Endothelial cell of umbilical vein (primary cell): ENCODE measurements at regions of chr6 and their contacts with region 1.

Region 1: GRCh38 chr6:46848684-46849360 is 55.6 kb downstream of the MEP1A start:
- DNase-seq: peak; percentile 82
- H3K4me3 ChIP-seq: no peak overlapping the region
- H3K27ac ChIP-seq: peak overlapping the region; percentile 54
- H3K4me1 ChIP-seq: peaks cover 31% of the 10 kb centered on the region
- H3K27me3 ChIP-seq: no peaks in the 10 kb centered on the region
- CTCF ChIP-seq: peak; percentile 97
- POLR2A ChIP-seq: no peak

Region 2: GRCh38 chr6:46347669-46348068 is 501.2 kb before region 1 on chr6:
- CTCF ChIA-PET with region 1: no interaction called
- POLR2A ChIA-PET with region 1: no interaction called
- dilution Hi-C with region 1: no loop called
- intact Hi-C with region 1: no loop called
- DNase-seq: no peak
- H3K4me3 ChIP-seq: no peak overlapping the region
- H3K27ac ChIP-seq: no peak overlapping the region
- H3K4me1 ChIP-seq: no peaks in the 10 kb centered on the region
- H3K27me3 ChIP-seq: no peaks in the 10 kb centered on the region
- CTCF ChIP-seq: no peak
- POLR2A ChIP-seq: no peak

Region 3: DNA sequence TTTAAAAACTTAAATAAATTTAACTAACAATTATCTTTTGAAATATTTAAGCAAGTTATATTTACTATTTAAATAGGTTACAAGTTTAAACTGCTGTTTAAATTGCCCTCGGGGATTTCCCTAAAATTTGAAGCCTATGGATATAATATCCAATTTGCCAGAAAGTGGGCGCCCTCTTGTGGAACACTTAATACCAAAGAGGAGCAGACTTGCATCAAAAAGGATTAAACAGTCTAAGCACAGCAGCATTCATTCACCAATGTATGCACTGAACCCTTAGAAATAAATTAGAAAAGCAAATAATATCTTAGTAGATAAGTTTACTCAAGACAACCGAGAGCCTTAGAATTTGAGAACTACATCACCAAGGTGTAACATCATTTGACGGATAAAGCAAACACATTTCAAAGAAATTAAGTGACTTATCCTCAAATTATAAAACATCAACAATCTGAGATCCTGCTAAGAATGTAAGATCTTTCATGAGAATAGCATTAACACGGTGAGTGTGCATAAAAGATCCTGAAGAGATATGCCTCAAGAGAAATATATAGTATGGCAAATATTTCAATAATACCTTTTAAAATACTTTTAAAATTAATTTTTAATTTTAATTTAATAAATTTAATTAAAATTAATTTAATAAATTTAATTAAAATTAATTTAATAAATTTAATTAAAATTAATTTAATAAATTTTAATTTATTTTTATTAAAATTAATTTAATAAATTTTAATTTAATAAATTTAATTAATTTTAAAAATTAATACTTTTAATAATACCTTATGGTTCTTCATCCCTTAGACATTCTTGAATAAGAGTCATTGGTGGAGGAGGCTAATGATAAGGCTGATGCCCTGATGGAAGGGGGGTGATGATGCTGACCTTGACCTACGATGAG is 67.1 kb before region 1 on chr6:
- CTCF ChIA-PET with region 1: no interaction called
- POLR2A ChIA-PET with region 1: no interaction called
- dilution Hi-C with region 1: no loop called
- intact Hi-C with region 1: loop called (anchors 1 kb)
- DNase-seq: peak; percentile 63
- H3K4me3 ChIP-seq: no peak overlapping the region
- H3K27ac ChIP-seq: no peak overlapping the region
- H3K4me1 ChIP-seq: no peaks in the 10 kb centered on the region
- H3K27me3 ChIP-seq: peaks cover 0 to 4% of the 10 kb centered on the region in 2 experiments
- CTCF ChIP-seq: peak; percentile 50 to 60
- POLR2A ChIP-seq: no peak

Region 4: GRCh38 chr6:46935674-46936073 is 86.9 kb after region 1 on chr6:
- CTCF ChIA-PET with region 1: interaction called, 14 read pairs
- POLR2A ChIA-PET with region 1: no interaction called
- dilution Hi-C with region 1: no loop called
- intact Hi-C with region 1: loop called (anchors 1 kb)
- DNase-seq: peak; percentile 85
- H3K4me3 ChIP-seq: no peak overlapping the region
- H3K27ac ChIP-seq: peak overlapping the region; percentile 3
- H3K4me1 ChIP-seq: peaks cover 17% of the 10 kb centered on the region
- H3K27me3 ChIP-seq: peaks cover 0 to 4% of the 10 kb centered on the region in 2 experiments
- CTCF ChIP-seq: no peak
- POLR2A ChIP-seq: peak; percentile 47

Region 5: GRCh38 chr6:46993846-46994245 is 145.0 kb after region 1 on chr6:
- CTCF ChIA-PET with region 1: interaction called, 112 read pairs
- POLR2A ChIA-PET with region 1: interaction called, 5 read pairs
- dilution Hi-C with region 1: no loop called
- intact Hi-C with region 1: loop called (anchors 1 kb)
- DNase-seq: peak; percentile 84
- H3K4me3 ChIP-seq: no peak overlapping the region
- H3K27ac ChIP-seq: peak overlapping the region; percentile 83
- H3K4me1 ChIP-seq: peaks cover 38% of the 10 kb centered on the region
- H3K27me3 ChIP-seq: no peaks in the 10 kb centered on the region
- CTCF ChIP-seq: no peak
- POLR2A ChIP-seq: no peak

Region 6: GRCh38 chr6:47097092-47097945 is 248.5 kb after region 1 on chr6:
- CTCF ChIA-PET with region 1: interaction called, 18 read pairs
- POLR2A ChIA-PET with region 1: no interaction called
- dilution Hi-C with region 1: no loop called
- intact Hi-C with region 1: loop called (anchors 1 kb)
- DNase-seq: peak; percentile 77
- H3K4me3 ChIP-seq: no peak overlapping the region
- H3K27ac ChIP-seq: no peak overlapping the region
- H3K4me1 ChIP-seq: peaks cover 8% of the 10 kb centered on the region
- H3K27me3 ChIP-seq: no peaks in the 10 kb centered on the region
- CTCF ChIP-seq: peak; percentile 58 to 62
- POLR2A ChIP-seq: no peak

Region 7: GRCh38 chr6:47278550-47278949 is 429.7 kb after region 1 on chr6:
- CTCF ChIA-PET with region 1: no interaction called
- POLR2A ChIA-PET with region 1: no interaction called
- dilution Hi-C with region 1: no loop called
- intact Hi-C with region 1: no loop called
- DNase-seq: no peak
- H3K4me3 ChIP-seq: no peak overlapping the region
- H3K27ac ChIP-seq: no peak overlapping the region
- H3K4me1 ChIP-seq: no peaks in the 10 kb centered on the region
- H3K27me3 ChIP-seq: no peaks in the 10 kb centered on the region
- CTCF ChIP-seq: no peak
- POLR2A ChIP-seq: no peak